Activated CD4-positive, alpha-beta memory T cell treated with anti-CD3 and anti-CD28 coated beads for 36 hours (primary cell): ENCODE measurements at regions of chr1 and their contacts with region 1.

Region 1: GRCh38 chr1:155466996-155467395 is 95.6 kb downstream of the ASH1L start:
- DNase-seq: no peak
- H3K4me3 Mint-ChIP-seq: no peak overlapping the region
- H3K27ac Mint-ChIP-seq: peak overlapping the region; percentile 36
- H3K4me1 Mint-ChIP-seq: peaks cover 49% of the 10 kb centered on the region
- H3K27me3 Mint-ChIP-seq: no peaks in the 10 kb centered on the region

Region 2: GRCh38 chr1:155499953-155500639 is 33.1 kb after region 1 on chr1:
- CTCF ChIA-PET with region 1: no interaction called
- POLR2A ChIA-PET with region 1: no interaction called
- intact Hi-C with region 1: no loop called
- DNase-seq: no peak
- H3K4me3 Mint-ChIP-seq: no peak overlapping the region
- H3K27ac Mint-ChIP-seq: peak overlapping the region; percentile 18
- H3K4me1 Mint-ChIP-seq: peaks cover 31% of the 10 kb centered on the region
- H3K27me3 Mint-ChIP-seq: no peaks in the 10 kb centered on the region

Region 3: DNA sequence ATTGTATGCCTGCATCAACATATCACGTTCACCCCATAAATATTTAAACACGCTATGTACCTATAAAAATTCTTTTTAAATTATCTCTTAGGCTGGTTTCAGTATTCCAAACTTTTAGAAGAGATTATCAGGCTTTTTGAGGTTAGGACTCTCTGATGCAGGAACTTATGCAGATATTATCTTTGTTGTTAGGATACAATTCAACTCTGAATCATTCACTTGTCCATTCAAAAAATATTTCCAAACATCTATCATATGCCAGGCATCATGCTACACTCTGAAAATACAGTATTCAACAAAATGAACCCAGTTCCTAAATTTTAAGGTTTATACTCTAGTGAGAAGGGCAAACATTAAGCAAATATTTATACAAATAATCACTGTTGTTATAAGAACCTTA is 55.1 kb after region 1 on chr1:
- CTCF ChIA-PET with region 1: no interaction called
- POLR2A ChIA-PET with region 1: no interaction called
- intact Hi-C with region 1: loop called (anchors 5 kb)
- DNase-seq: no peak
- H3K4me3 Mint-ChIP-seq: no peak overlapping the region
- H3K27ac Mint-ChIP-seq: no peak overlapping the region
- H3K4me1 Mint-ChIP-seq: peaks cover 43% of the 10 kb centered on the region
- H3K27me3 Mint-ChIP-seq: no peaks in the 10 kb centered on the region